ENCODE measurements at regions of chr2 and their contacts with region 1.

Region 1: DNA sequence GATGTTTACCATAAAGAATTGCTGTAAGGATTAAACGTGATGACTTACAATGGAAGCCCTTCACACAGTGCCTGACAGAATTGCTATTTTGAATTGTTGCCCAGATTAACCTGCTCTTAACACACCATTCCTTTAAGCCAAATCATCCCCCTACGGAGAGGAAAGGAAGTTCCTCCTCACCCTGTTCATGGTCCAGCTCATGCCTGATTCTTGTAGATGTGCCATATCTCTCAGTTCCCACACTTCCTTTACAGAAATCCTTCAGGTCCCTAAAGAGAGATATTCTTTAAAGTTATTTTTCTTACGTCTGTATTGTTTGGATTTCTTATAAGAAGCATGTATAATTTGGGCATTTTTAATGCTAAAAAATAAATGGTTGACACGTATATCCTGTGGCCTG is 127.5 kb upstream of the DAPL1 start:
- DNase-seq: peak; percentile 74
- H3K4me3 ChIP-seq: no peak overlapping the region
- H3K27ac ChIP-seq: no peak overlapping the region
- H3K4me1 ChIP-seq: peaks cover 15% of the 10 kb centered on the region
- H3K27me3 ChIP-seq: no peaks in the 10 kb centered on the region
- CTCF ChIP-seq: peak in 1 of 2 donors; percentile 2

Region 2: DNA sequence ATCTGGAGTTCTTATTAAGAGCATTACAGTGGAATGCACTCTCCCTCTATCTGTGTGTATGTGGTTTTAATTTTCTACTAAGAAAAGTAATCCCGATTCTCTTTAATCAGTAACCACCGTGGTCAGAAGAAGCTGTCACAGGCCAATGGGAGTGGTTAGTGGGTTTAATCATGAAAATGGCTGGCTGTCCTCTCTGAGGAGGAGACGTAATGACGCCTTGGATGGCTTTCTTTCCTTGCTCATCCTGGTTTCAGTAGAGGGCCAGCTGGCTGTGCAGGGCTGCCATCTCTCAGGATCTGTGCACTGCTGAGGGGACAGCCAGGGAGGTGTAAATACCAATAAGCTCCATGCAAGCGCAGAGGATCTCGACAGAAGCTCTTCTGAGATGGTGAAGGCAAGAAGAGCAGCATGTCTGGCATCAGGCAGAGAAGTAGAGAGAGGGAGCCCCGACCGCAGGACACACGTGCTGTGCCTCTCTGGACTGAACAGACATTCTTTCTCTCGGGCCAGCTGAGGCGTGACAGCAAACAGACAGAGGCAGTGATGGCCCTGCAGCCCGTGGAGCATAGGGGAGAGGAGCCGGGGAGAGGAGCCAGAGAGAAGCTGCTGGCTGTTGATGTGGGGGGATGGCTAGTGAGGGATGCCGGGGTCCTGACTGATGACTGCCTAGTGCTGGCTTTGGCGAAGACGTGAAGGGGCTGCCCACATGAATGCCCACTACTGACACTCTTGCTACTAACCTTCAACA is 62.5 kb after region 1 on chr2:
- CTCF ChIA-PET with region 1: no interaction called
- dilution Hi-C with region 1: no loop called
- in situ Hi-C with region 1: no loop called
- intact Hi-C with region 1: loop called (anchors 5 kb)
- DNase-seq: no peak
- H3K4me3 ChIP-seq: no peak overlapping the region
- H3K27ac ChIP-seq: no peak overlapping the region
- H3K4me1 ChIP-seq: peaks cover 21% of the 10 kb centered on the region
- H3K27me3 ChIP-seq: no peaks in the 10 kb centered on the region
- CTCF ChIP-seq: no peak

Measured in mammary epithelial cell (primary cell).